K562 (cell line): ENCODE measurements at regions of chr2 and their contacts with region 1.

Region 1: DNA sequence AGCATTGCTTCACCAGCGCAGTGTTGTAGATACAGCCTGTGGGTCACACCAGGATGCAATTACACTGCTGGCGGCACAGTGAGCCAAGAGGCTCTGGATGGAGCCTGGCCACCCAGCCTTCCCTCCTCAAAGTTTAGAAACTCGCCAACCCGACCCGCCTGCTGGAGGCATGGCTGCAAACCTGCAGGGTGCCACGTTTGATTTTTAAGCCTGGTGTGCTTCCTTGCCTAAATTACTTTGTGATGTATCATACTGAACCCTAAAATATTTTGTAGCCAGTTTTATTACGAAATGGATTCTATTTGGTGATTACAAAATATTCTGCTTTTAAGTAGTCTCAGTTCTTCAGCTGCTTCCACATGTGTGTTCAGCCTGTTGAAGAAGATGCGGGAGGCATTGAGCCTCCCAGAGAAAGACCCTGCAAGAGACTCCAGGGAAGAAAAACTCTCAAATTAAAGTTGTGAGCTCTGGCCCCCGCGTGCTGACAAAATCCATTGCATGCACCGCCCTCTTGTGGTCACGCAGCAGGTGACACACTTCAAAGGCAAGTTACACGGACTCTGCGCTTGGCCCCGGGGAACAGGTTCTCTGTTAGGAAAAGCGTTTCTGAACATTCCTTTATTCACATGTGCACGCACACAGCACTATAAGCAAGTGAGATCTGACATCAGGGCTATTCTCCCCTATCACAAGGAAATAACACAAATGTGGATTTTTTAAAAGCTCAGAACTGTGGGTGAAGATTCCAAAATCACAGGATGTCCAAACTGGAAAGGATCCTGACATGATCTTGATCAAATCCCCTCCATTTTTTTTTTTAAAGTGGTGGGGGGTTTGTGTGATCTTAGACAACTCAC is 63.0 kb upstream of the TWIST2 start:
- DNase-seq: peak; percentile 48 to 59 (median 50)
- ATAC-seq: peak; percentile 88
- H3K4me3 ChIP-seq: no peak overlapping the region
- H3K27ac ChIP-seq: no peak overlapping the region
- H3K4me1 ChIP-seq: no peaks in the 10 kb centered on the region
- H3K27me3 ChIP-seq: peaks cover 14 to 46% of the 10 kb centered on the region in 2 experiments; a peak in 4 of 5 replicates
- CTCF ChIP-seq: peak; percentile 75 to 77 (median 76)
- EP300 ChIP-seq: no peak
- POLR2A ChIP-seq: no peak
- RAD21 ChIP-seq: peak; percentile 41 to 67; a peak in 3 of 4 replicates

Region 2: GRCh38 chr2:238352361-238352760 is 432.5 kb before region 1 on chr2:
- CTCF ChIA-PET with region 1: no interaction called
- POLR2A ChIA-PET with region 1: no interaction called
- in situ Hi-C with region 1: loop called (anchors 25 kb)
- intact Hi-C with region 1: loop called (anchors 10 kb)
- DNase-seq: no peak
- ATAC-seq: no peak
- H3K4me3 ChIP-seq: no peak overlapping the region
- H3K27ac ChIP-seq: no peak overlapping the region
- H3K4me1 ChIP-seq: no peaks in the 10 kb centered on the region
- H3K27me3 ChIP-seq: no peaks in the 10 kb centered on the region
- CTCF ChIP-seq: no peak
- EP300 ChIP-seq: no peak
- POLR2A ChIP-seq: no peak
- RAD21 ChIP-seq: no peak

Region 3: DNA sequence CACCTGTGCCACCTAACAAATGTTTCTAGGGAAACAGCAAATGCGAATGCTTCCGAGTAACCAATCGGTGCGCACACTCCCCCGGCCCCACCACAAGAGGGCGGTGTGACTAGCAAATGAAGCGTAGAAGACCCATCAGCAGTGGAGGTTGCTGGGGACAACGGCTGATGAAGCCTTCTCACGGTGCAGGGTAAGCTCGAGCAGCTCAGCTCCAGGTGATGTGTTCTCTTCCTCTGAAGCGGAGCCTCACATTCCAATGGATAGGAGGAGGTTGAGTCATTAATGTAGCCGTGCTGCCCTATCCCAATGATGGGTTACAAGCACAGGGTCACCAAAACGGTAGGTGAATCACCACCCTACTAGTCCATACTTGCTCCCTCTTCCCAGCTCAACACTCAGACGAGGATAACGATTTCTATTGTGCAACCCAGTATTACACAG is 64.6 kb before region 1 on chr2:
- CTCF ChIA-PET with region 1: no interaction called
- POLR2A ChIA-PET with region 1: no interaction called
- in situ Hi-C with region 1: no loop called
- intact Hi-C with region 1: loop called (anchors 5 kb)
- DNase-seq: peak; percentile 22 to 63 (median 52)
- ATAC-seq: peak; percentile 75
- H3K4me3 ChIP-seq: no peak overlapping the region
- H3K27ac ChIP-seq: no peak overlapping the region
- H3K4me1 ChIP-seq: no peaks in the 10 kb centered on the region
- H3K27me3 ChIP-seq: peaks cover 0 to 9% of the 10 kb centered on the region in 2 experiments; a peak in 1 of 5 replicates
- CTCF ChIP-seq: peak; percentile 60 to 76 (median 61)
- EP300 ChIP-seq: no peak
- POLR2A ChIP-seq: no peak
- RAD21 ChIP-seq: peak in 1 of 2 experiments; percentile 34; a peak in 1 of 4 replicates

Region 4: DNA sequence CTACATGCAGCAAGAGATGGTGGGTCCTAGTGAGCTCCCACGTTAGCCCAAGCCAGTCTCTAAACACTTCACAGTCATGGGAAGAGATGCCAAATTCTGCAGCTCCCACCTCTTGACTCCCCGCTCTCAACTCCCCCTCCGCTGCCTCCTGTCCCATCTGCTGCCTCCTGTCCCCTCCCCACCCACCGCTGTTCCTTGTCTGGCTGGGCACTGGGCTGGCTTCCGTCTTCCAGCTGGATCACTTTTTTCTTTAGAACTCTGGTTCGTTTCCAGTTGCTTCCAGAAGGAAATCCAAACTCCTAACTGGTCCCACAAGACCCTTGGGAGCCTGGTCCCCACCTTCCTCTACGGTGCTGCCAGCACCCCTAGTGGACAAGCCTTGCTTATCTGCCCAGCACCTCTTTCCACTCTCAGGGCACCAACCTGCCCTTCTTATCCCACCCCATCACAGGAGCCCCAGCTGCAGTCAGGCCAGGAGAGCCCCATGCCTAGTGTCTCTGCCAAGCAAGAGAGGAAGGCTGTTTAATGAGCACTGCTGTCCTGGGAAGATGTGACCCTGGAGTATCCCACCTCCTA is 50.9 kb after region 1 on chr2:
- CTCF ChIA-PET with region 1: no interaction called
- POLR2A ChIA-PET with region 1: no interaction called
- in situ Hi-C with region 1: no loop called
- intact Hi-C with region 1: no loop called
- DNase-seq: no peak
- ATAC-seq: no peak
- H3K4me3 ChIP-seq: no peak overlapping the region
- H3K27ac ChIP-seq: no peak overlapping the region
- H3K4me1 ChIP-seq: no peaks in the 10 kb centered on the region
- H3K27me3 ChIP-seq: no peaks in the 10 kb centered on the region; a peak in 1 of 5 replicates
- CTCF ChIP-seq: peak in 2 of 3 experiments; percentile 4 to 28; a peak in 1 of 6 replicates
- EP300 ChIP-seq: no peak
- POLR2A ChIP-seq: no peak
- RAD21 ChIP-seq: no peak